BJ (cell line): ENCODE measurements at regions of chr3 and their contacts with region 1.

Region 1: DNA sequence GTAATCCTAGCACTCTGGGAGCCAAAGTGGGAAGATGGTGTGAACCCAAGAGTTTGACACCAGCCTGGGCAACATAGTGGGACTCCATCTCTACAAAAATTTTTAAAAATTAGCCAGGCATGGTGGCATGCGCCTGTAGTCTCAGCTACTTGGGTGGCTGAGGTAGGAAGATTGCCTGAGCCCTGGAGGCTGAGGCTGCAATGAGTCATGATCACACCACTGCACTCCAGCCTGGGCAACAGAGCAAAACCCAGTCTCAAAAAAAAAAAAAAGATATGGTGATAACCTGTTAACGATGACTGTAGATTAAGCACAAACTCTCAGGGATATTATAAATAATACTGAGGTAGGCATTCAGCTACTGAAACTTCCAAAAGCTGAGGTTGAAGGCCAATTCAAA is 107.5 kb downstream of the SLC49A4 start:
- DNase-seq: no peak
- H3K4me3 ChIP-seq: no peak overlapping the region
- H3K27me3 ChIP-seq: peaks cover 7% of the 10 kb centered on the region
- CTCF ChIP-seq: no peak

Region 2: DNA sequence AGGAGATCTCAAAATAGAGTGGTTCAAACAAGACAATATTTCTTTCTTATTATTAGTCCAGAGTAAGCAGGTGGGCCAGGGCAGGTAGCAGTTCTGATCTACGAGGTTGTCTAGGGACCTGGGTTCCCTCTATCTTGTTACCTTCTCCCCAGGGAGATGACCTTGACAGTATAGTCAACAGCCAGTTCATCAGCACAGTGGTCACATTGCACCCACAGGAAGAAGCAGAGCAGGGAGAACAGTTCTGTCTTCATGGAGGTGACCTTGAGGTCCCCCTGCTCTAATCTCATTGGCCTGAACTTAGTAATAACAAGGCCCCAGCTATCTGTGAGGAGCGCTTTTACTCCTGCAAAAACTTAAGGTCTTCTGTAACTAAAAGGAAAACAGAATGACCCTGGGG is 85.7 kb before region 1 on chr3:
- CTCF ChIA-PET with region 1: no interaction called
- POLR2A ChIA-PET with region 1: interaction called, 12 read pairs
- DNase-seq: no peak
- H3K4me3 ChIP-seq: no peak overlapping the region
- H3K27me3 ChIP-seq: no peaks in the 10 kb centered on the region
- CTCF ChIP-seq: no peak